Activated CD4-positive, alpha-beta T cell treated with anti-CD3 and anti-CD28 coated beads for 36 hours (primary cell): ENCODE measurements at regions of chr4 and their contacts with region 1.

Region 1: DNA sequence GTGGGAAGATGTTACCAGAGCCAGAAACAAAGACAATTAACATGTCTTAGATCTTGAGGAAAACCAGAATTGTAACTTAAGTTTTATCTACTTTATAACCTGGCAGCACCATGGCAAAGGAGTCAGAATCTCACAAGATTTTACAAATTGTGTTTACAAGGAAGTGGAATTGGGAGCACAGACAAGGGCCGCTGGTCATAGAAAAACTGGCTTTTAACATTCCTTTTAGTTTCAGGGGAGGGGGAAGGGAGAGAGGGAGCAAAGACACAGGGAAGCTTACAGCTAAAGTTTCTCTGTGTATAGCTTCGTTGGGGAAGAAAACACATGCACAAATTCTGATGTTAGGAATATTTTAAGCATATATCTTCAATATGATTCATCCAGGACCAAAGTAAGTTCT is 10.3 kb upstream of the UGT2B11 start:
- DNase-seq: no peak
- ATAC-seq: no peak
- H3K4me3 Mint-ChIP-seq: no peak overlapping the region
- H3K27ac Mint-ChIP-seq: no peak overlapping the region
- H3K4me1 Mint-ChIP-seq: no peaks in the 10 kb centered on the region
- H3K27me3 Mint-ChIP-seq: no peaks in the 10 kb centered on the region

Region 2: GRCh38 chr4:68576272-68577100 is 648.4 kb before region 1 on chr4 and contains the start of gene UGT2B17:
- CTCF ChIA-PET with region 1: no interaction called
- POLR2A ChIA-PET with region 1: no interaction called
- intact Hi-C with region 1: no loop called
- DNase-seq: no peak
- ATAC-seq: no peak
- H3K4me3 Mint-ChIP-seq: no peak within 1 kb of the TSS
- H3K27ac Mint-ChIP-seq: no peak within 1 kb of the TSS
- H3K4me1 Mint-ChIP-seq: no peaks in the 10 kb centered on the region
- H3K27me3 Mint-ChIP-seq: no peaks in the 10 kb centered on the region
- total RNA-seq, gene UGT2B17: not detected

Region 3: GRCh38 chr4:69383281-69383680 is 158.4 kb after region 1 on chr4:
- CTCF ChIA-PET with region 1: no interaction called
- POLR2A ChIA-PET with region 1: no interaction called
- intact Hi-C with region 1: loop called (anchors 5 kb)
- DNase-seq: no peak
- ATAC-seq: no peak
- H3K4me3 Mint-ChIP-seq: no peak overlapping the region
- H3K27ac Mint-ChIP-seq: no peak overlapping the region
- H3K4me1 Mint-ChIP-seq: no peaks in the 10 kb centered on the region
- H3K27me3 Mint-ChIP-seq: no peaks in the 10 kb centered on the region

Region 4: GRCh38 chr4:69718396-69719253 is 493.7 kb after region 1 on chr4:
- CTCF ChIA-PET with region 1: no interaction called
- POLR2A ChIA-PET with region 1: no interaction called
- intact Hi-C with region 1: no loop called
- DNase-seq: no peak
- ATAC-seq: no peak
- H3K4me3 Mint-ChIP-seq: no peak overlapping the region
- H3K27ac Mint-ChIP-seq: no peak overlapping the region
- H3K4me1 Mint-ChIP-seq: no peaks in the 10 kb centered on the region
- H3K27me3 Mint-ChIP-seq: no peaks in the 10 kb centered on the region